Activated CD4-positive, alpha-beta T cell treated with anti-CD3 and anti-CD28 coated beads, Interleukin-2, amount 10 ng/mL, durations not matched to agents 7 days and 5 days (primary cell): ENCODE measurements at regions of chr17 and their contacts with region 1.

Region 1: GRCh38 chr17:64025732-64026294 is 5.4 kb upstream of the ICAM2 start:
- DNase-seq: peak; percentile 94
- H3K4me3 Mint-ChIP-seq: peak overlapping the region; percentile 38
- H3K27ac Mint-ChIP-seq: peak overlapping the region; percentile 93
- H3K4me1 Mint-ChIP-seq: peaks cover 72% of the 10 kb centered on the region
- H3K27me3 Mint-ChIP-seq: no peaks in the 10 kb centered on the region

Region 2: DNA sequence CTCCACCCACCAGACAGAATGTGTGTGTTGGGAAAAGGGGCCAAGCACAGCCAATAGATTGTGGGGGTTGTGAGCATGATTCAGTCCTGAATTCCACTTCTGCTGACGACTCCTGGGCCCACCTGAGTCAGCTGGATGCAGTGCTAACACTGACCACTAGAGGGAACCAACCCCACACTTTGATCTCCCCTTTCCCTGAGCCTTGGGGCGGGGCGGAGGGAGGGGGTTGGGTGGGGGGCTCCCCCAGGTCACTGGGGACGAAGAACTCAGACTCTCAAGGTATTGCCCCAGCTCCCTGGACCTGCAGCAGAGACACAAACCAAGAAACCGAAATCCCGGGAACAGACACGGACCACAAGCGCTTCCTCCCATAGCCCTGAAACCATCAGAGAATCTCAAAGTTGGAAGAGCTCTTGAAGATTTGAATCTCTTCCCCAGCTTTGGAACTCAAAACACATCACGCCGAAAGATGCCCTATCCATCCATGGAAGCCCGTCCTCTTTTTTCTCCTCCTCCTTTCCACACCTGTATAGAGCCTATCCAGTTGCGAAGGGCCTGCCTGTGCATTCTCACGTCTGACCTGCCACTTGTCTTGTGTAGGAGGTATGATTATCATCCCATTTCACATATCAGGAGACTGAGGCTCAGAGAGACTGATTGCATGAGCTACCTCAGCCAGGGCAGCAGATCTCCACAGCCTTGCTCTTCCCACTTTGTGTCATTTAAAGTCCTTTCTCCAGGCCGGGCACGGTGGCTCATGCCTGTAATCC is 114.0 kb before region 1 on chr17:
- CTCF ChIA-PET with region 1: interaction called, 16 read pairs
- POLR2A ChIA-PET with region 1: no interaction called
- DNase-seq: peak; percentile 68
- H3K4me3 Mint-ChIP-seq: no peak overlapping the region
- H3K27ac Mint-ChIP-seq: no peak overlapping the region
- H3K4me1 Mint-ChIP-seq: peaks cover 3% of the 10 kb centered on the region
- H3K27me3 Mint-ChIP-seq: peaks cover 12% of the 10 kb centered on the region

Region 3: DNA sequence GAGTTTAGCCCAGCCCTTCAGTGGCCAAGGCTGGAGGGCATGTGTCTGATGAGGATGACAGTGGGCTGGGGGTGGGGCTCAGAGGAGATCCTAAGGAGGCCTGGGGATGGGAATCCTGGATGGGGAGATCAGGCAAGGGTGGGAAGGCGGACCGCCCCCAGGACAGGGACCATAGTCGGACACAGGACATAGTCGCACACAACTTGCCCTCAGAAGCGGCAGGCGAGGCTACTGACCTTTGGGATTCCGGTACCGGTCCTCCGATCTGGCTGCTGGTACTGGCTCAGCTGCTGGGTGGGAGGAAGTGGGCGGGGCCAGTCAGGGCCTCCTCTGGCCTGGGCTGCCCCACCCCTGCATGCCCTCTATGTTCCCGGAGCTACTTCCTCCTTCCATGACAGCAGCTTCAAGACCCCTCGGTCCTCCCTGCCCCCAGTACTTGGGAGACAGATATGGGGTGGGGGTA is 94.7 kb before region 1 on chr17:
- CTCF ChIA-PET with region 1: interaction called, 24 read pairs
- POLR2A ChIA-PET with region 1: no interaction called
- DNase-seq: peak; percentile 65
- H3K4me3 Mint-ChIP-seq: peak overlapping the region; percentile 95
- H3K27ac Mint-ChIP-seq: peak overlapping the region; percentile 95
- H3K4me1 Mint-ChIP-seq: peaks cover 30% of the 10 kb centered on the region
- H3K27me3 Mint-ChIP-seq: peaks cover 4% of the 10 kb centered on the region

Region 4: GRCh38 chr17:63993368-63993985 is 32.3 kb before region 1 on chr17:
- CTCF ChIA-PET with region 1: interaction called, 14 read pairs
- POLR2A ChIA-PET with region 1: interaction called, 5 read pairs
- DNase-seq: peak; percentile 41
- H3K4me3 Mint-ChIP-seq: no peak overlapping the region
- H3K27ac Mint-ChIP-seq: peak overlapping the region; percentile 85
- H3K4me1 Mint-ChIP-seq: peaks cover 75% of the 10 kb centered on the region
- H3K27me3 Mint-ChIP-seq: peaks cover 19% of the 10 kb centered on the region

Region 5: DNA sequence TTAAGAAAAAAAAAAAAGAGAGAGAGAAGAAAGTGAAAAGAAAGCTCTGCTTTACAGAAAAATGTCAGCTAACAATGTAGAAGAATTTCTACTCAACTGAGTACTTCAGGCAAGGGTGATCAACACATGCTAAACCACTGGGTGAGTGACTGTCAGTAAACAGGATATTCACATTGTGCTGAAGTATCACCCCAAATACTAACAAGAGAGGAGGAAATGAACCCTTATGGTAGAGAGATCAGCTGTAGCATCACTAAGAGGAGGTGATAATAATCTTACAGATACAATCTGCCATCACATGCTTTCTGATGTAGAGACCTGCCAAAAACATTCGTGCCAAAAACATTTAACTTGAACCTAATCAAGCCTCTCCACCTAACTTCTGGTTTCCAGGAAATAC is 25.3 kb after region 1 on chr17:
- CTCF ChIA-PET with region 1: interaction called, 33 read pairs
- POLR2A ChIA-PET with region 1: interaction called, 3 read pairs
- DNase-seq: peak; percentile 61
- H3K4me3 Mint-ChIP-seq: peak overlapping the region; percentile 52
- H3K27ac Mint-ChIP-seq: peak overlapping the region; percentile 93
- H3K4me1 Mint-ChIP-seq: peaks cover 52% of the 10 kb centered on the region
- H3K27me3 Mint-ChIP-seq: no peaks in the 10 kb centered on the region

Region 6: DNA sequence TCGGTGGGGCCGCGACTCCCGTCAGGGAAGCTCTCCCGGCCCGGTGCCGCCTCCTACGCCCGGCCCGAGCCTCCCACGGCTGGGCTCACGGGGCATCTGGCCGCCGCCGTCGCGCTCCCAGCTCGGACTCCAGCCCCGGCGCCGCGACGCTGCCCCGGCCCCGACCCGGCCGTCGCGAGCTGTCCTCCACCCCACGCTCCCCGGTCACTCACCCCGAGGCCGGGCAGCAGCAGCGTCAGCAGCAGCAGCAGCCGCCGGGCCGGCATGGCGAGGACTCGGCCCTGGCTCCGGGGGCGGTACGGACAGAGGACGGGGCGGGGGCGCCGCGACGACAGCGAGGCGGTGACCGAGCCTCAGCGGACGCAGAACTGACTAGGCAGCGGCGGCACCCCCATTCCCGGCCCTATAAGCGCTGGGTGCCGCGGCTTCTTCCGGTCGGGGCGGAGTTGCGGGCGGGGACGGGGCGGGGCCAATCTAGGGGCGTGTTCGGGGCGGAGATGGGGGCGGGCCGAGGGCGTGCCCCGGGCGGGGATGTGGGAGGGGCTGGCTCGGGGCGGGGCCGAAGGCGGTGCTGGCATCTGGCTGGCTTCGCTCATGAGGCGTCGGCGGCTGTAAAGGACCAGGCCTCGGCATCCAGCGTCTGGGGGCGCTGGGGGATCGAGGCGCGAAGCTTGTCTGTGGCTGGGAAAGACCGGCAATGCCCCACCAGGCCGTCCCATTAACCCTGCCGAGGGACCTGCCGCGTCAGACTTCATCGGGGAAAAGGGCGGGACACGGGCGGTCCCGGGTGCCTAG is 104.1 kb after region 1 on chr17 and contains the start of gene ERN1:
- CTCF ChIA-PET with region 1: interaction called, 225 read pairs
- POLR2A ChIA-PET with region 1: interaction called, 7 read pairs
- DNase-seq: peak; percentile 89
- H3K4me3 Mint-ChIP-seq: peak within 1 kb of the TSS; percentile 92
- H3K27ac Mint-ChIP-seq: peak within 1 kb of the TSS; percentile 92
- H3K4me1 Mint-ChIP-seq: peaks cover 53% of the 10 kb centered on the region
- H3K27me3 Mint-ChIP-seq: no peaks in the 10 kb centered on the region
- total RNA-seq, gene ERN1: 50.1 to 57.5 TPM

Region 7: GRCh38 chr17:64165367-64165766 is 139.6 kb after region 1 on chr17:
- CTCF ChIA-PET with region 1: no interaction called
- POLR2A ChIA-PET with region 1: no interaction called
- DNase-seq: no peak
- H3K4me3 Mint-ChIP-seq: no peak overlapping the region
- H3K27ac Mint-ChIP-seq: no peak overlapping the region
- H3K4me1 Mint-ChIP-seq: no peaks in the 10 kb centered on the region
- H3K27me3 Mint-ChIP-seq: no peaks in the 10 kb centered on the region

Region 8: DNA sequence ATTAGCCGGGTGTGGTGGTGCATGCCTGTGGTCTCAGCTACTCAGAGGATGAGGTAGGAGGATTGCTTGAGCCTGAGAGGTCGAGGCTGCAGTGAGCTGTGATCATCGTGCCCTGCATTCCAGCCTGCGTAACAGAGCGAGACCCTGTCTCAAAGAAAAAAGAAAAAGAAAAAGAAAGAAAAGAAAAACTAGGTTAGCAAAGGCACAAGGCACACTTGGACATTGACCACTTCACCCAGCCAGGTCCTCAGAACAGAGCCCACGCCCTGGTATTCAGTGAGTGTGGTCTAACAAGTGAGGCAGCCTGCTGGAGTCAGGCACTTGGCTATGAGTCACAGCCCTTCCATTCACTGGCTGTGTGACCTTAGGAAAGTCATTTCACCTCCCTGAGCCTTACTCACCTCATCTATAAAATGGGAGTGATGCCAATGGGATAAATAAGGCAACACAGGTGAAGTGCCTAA is 433.5 kb after region 1 on chr17:
- CTCF ChIA-PET with region 1: no interaction called
- POLR2A ChIA-PET with region 1: no interaction called
- DNase-seq: no peak
- H3K4me3 Mint-ChIP-seq: no peak overlapping the region
- H3K27ac Mint-ChIP-seq: peak overlapping the region; percentile 20
- H3K4me1 Mint-ChIP-seq: peaks cover 26% of the 10 kb centered on the region
- H3K27me3 Mint-ChIP-seq: no peaks in the 10 kb centered on the region